Stomach (tissue), 19 donors: ENCODE measurements at regions of chr19 and their contacts with region 1.

Region 1: DNA sequence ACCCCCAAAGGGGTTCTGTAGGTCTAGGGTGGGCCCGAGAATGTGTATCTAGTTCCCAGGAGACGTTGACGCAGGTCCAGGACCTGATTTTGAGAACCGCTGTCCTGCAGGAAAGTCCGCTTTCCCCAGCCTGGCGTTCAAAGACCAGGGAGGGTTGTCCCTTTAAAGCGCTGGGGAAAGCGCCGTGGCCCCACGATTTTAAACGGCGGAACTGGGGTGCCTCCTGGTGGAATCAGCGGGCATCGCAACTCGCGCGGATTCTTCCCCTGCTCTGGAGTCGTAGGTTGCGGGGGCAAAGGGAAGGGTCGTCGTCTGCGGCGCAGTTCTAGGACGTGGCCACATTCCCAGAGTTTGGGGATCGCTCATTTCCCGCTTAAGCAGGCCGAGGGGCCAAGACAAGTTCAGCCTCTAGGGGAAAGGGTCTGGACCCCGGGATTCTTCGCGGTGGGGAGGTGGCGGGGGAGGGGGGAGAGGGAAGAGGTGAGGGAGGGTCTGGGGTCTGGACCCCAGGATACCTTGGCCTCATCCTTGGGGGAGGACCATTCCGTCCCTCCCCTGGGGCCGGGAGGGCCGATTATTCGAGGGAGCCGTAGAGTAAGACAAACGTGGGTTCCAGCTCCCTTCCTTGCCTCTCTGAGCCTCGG is 7.7 kb downstream of the PNMA8B start:
- DNase-seq: peak; percentile 83 to 92
- H3K4me3 ChIP-seq: peak overlapping the region; percentile 22 to 30 (median 28)
- H3K27ac ChIP-seq: no peak overlapping the region
- H3K4me1 ChIP-seq: peaks cover 28 to 40% (median 33%) of the 10 kb centered on the region in 4 donors
- H3K27me3 ChIP-seq: peaks cover 3 to 68% (median 49%) of the 10 kb centered on the region in 3 donors
- CTCF ChIP-seq: peak in 5 of 7 experiments; percentile 89 to 97 (median 95)
- EP300 ChIP-seq: no peak
- POLR2A ChIP-seq: no peak

Region 2: GRCh38 chr19:46279177-46279576 is 208.7 kb before region 1 on chr19:
- intact Hi-C with region 1: loop called (anchors 5 kb)
- DNase-seq: no peak
- H3K4me3 ChIP-seq: no peak overlapping the region
- H3K27ac ChIP-seq: no peak overlapping the region
- H3K4me1 ChIP-seq: peaks cover 0 to 11% (median 6%) of the 10 kb centered on the region in 4 donors
- H3K27me3 ChIP-seq: peaks cover 0 to 9% (median 0%) of the 10 kb centered on the region in 3 donors
- CTCF ChIP-seq: no peak
- EP300 ChIP-seq: no peak
- POLR2A ChIP-seq: no peak

Region 3: DNA sequence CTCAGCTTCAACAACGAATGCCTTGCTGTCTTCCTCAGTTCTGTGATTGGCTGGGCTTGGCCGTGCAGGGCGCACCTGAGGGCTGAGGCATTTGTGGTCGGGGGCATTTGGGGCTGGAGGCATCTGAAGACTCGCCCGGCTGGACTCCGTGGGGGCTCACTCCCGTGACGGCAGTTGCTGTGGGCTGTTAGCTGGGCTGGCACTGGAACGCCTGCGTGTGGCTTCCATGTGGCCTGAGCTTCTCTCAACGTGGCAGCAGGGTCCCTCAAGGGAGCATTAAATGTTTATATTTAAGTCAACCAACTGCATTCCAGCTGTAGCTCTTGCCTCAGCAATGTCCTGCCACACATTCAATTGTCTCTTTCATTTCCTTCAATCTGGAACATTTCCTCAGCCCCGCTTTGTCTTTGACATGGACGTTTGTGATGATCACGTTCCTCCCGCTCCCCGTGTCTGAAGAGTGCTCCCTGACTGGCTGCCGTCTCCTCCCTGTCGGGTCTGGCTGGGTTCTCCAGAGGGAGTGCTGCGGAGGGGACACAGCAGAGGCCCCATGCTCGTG is 95.6 kb before region 1 on chr19:
- intact Hi-C with region 1: loop called (anchors 5 kb)
- DNase-seq: peak in 1 of 2 donors; percentile 64
- H3K4me3 ChIP-seq: no peak overlapping the region
- H3K27ac ChIP-seq: peak overlapping the region in 2 of 5 donors; percentile 11 to 25
- H3K4me1 ChIP-seq: peaks cover 7 to 25% (median 12%) of the 10 kb centered on the region in 4 donors
- H3K27me3 ChIP-seq: no peaks in the 10 kb centered on the region
- CTCF ChIP-seq: no peak
- EP300 ChIP-seq: no peak
- POLR2A ChIP-seq: no peak

Region 4: DNA sequence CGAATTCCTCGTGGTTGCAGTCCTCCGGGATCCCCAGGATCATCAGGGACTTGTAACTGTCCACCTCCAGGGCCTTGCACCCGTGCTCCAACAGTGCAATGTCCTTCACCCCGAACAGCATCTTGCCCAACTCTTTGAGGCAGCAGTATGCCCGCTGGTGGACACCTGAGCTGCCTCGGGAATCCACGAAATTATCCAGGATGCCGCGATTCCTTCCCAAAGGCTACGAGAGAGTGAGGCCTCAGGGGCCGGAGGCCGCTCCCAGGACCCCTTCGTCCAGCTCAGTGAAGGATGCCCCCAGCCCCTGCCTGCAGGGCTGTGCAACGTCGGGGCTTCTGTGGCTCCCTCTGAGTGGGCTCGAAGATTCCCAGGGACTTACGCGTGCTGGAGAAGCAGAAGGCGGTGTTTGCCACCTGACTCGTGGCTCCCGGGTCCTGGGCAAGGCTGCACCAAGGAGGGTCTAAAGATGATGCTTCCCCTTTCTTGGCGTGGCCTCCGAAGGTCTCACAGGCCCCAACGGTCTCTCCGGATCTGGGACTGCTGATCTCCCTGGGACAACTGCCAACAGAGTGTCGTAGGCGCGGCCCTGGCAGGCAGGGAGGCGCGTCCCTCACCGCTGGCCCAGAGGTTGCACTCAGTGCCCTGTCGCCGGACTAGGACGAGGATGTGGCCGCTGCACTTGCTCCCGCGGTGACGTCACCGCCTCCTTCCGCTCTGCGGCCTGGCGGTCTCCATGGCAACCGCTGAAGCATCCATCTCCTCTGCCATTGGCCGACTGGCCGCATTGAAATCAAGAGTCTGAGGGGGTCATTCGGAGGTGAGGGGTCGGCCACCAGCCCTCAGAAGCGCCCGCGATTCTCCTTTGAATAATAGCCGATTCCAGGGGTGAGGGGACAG is 59.4 kb before region 1 on chr19 and contains the start of gene PNMA8C:
- intact Hi-C with region 1: no loop called
- DNase-seq: peak; percentile 50 to 91
- H3K4me3 ChIP-seq: peak within 1 kb of the TSS; percentile 8 to 34 (median 18)
- H3K27ac ChIP-seq: peak within 1 kb of the TSS in 1 of 5 donors; percentile 13
- H3K4me1 ChIP-seq: peaks cover 6 to 31% (median 19%) of the 10 kb centered on the region in 4 donors
- H3K27me3 ChIP-seq: peaks cover 0 to 91% (median 25%) of the 10 kb centered on the region in 3 donors
- CTCF ChIP-seq: no peak
- EP300 ChIP-seq: no peak
- POLR2A ChIP-seq: no peak
- total RNA-seq, gene PNMA8C: 0.18 TPM in 1 of 5 donors, not detected in the others

Region 5: GRCh38 chr19:46803555-46803954 is 315.6 kb after region 1 on chr19:
- intact Hi-C with region 1: no loop called
- DNase-seq: no peak
- H3K4me3 ChIP-seq: no peak overlapping the region
- H3K27ac ChIP-seq: no peak overlapping the region
- H3K4me1 ChIP-seq: no peaks in the 10 kb centered on the region
- H3K27me3 ChIP-seq: no peaks in the 10 kb centered on the region
- CTCF ChIP-seq: no peak
- EP300 ChIP-seq: no peak
- POLR2A ChIP-seq: no peak